Calu3 (cell line): ENCODE measurements at regions of chr6 and their contacts with region 1.

Region 1: GRCh38 chr6:47455534-47456209 is 21.9 kb upstream of the CD2AP start:
- DNase-seq: peak; percentile 43
- H3K4me3 Mint-ChIP-seq: no peak overlapping the region
- H3K27ac Mint-ChIP-seq: no peak overlapping the region
- H3K4me1 Mint-ChIP-seq: peaks cover 33% of the 10 kb centered on the region
- H3K27me3 Mint-ChIP-seq: no peaks in the 10 kb centered on the region
- CTCF ChIP-seq: no peak

Region 2: DNA sequence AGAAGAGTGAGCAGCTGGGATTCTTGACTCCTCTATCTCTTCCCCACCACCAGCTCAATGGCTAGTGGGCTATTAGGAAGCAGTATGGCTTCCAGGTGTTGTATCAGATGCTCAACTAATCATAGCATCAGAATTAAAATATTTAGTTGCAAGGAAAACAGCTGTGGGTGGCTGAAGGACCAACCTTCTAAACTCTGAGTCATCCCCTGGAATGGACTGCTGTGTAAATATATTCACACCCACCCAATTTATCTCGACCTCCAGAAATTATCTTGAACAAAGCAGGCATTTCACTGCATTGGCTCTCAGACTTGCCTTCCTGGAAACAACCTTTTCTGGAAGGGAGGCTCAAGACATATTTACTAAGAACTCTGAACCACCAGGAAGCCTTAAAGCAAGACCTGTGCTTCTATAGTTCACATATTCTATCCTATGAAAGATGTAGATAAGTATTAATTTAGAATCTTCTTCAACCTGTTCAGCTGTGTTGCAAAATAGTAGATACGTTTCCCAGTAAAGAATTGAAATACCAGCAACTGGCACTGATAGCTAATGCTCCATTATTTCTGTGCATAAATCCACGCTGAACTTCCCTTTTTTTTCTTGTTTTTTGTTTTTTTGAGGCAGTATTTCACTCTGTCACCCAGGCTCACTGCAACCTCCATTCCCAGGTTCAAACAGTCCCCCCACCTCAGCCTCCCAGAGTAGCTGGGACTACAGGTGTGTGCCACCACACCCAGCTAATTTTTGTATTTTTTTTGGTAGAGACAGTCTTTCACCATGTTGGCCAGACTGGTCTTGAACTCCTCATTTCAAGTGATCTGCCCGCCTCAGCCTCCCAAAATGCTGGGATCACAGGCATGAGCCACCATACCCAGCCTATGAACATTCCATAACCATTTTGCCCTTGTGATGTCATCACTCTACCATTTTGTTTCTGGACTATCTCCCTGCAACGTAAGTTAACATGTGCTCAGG is 35.0 kb before region 1 on chr6:
- CTCF ChIA-PET with region 1: no interaction called
- intact Hi-C with region 1: loop called (anchors 1 kb)
- DNase-seq: peak; percentile 58
- H3K4me3 Mint-ChIP-seq: peak overlapping the region; percentile 29
- H3K27ac Mint-ChIP-seq: peak overlapping the region; percentile 59
- H3K4me1 Mint-ChIP-seq: peaks cover 59% of the 10 kb centered on the region
- H3K27me3 Mint-ChIP-seq: no peaks in the 10 kb centered on the region
- CTCF ChIP-seq: no peak

Region 3: DNA sequence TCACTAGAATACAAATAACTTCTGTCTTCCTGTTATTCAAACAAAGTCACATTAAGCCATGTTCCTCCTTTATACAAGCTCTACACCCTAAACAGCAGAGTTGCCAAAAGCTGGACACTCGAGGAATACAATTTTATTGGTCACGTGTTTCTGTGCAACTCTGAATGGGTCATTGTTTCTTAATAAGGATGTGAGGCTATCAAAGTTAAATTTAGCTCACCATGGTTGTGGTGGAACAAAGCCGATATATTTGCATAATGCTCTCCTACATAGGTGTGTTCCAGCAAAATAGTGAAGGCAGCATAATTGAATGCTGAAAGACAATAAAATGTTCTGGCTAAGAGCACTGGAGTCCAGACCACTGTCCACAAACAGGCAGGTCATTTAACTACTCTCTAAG is 15.0 kb before region 1 on chr6:
- CTCF ChIA-PET with region 1: interaction called, 7 read pairs
- intact Hi-C with region 1: loop called (anchors 2 kb)
- DNase-seq: peak; percentile 37
- H3K4me3 Mint-ChIP-seq: no peak overlapping the region
- H3K27ac Mint-ChIP-seq: peak overlapping the region; percentile 64
- H3K4me1 Mint-ChIP-seq: peaks cover 36% of the 10 kb centered on the region
- H3K27me3 Mint-ChIP-seq: no peaks in the 10 kb centered on the region
- CTCF ChIP-seq: no peak

Region 4: GRCh38 chr6:47477497-47478232 is 22.0 kb after region 1 on chr6 and contains the start of gene CD2AP:
- CTCF ChIA-PET with region 1: interaction called, 9 read pairs
- intact Hi-C with region 1: loop called (anchors 1 kb)
- DNase-seq: peak; percentile 96
- H3K4me3 Mint-ChIP-seq: peak within 1 kb of the TSS; percentile 86
- H3K27ac Mint-ChIP-seq: peak within 1 kb of the TSS; percentile 94
- H3K4me1 Mint-ChIP-seq: peaks cover 42% of the 10 kb centered on the region
- H3K27me3 Mint-ChIP-seq: no peaks in the 10 kb centered on the region
- CTCF ChIP-seq: no peak
- total RNA-seq, gene CD2AP: 105 and 121 TPM in 2 replicates